Activated naive CD4-positive, alpha-beta T cell treated with anti-CD3 and anti-CD28 coated beads for 36 hours (primary cell): ENCODE measurements at regions of chr7 and their contacts with region 1.

Region 1: DNA sequence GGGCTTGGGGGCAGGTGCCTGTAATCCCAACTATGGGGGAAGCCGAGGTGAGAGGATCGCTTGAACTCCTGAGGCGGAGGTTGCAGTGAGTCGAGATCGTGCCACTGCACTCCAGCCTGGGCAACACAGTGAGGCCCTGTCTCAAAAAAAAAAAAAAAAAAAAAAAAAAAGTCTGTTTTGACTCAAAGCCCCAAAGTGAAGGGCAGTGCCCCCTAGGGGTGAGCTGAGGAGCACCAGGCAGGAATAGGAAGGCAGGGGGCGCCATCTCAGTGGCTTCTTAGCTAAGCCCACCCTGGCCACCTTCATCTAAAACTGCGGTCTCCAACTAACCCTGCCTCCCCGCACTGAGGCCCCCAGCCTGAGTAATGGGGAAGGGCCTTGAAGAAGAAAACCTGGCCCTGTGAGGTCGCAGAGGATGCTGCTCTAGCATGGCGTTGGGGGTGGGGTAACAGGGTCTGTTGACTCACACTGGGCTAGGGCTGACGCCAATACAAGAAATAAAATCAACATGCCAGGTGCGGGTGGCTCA is 9.8 kb downstream of the PODXL start:
- DNase-seq: peak; percentile 72
- H3K4me3 Mint-ChIP-seq: no peak overlapping the region
- H3K27ac Mint-ChIP-seq: no peak overlapping the region
- H3K4me1 Mint-ChIP-seq: no peaks in the 10 kb centered on the region
- H3K27me3 Mint-ChIP-seq: peaks cover 5% of the 10 kb centered on the region

Region 2: GRCh38 chr7:131507592-131508331 is 38.9 kb before region 1 on chr7:
- CTCF ChIA-PET with region 1: interaction called, 9 read pairs
- intact Hi-C with region 1: loop called (anchors 1 kb)
- DNase-seq: peak; percentile 91
- H3K4me3 Mint-ChIP-seq: no peak overlapping the region
- H3K27ac Mint-ChIP-seq: no peak overlapping the region
- H3K4me1 Mint-ChIP-seq: peaks cover 22% of the 10 kb centered on the region
- H3K27me3 Mint-ChIP-seq: peaks cover 8% of the 10 kb centered on the region

Region 3: GRCh38 chr7:131625817-131626372 is 79.2 kb after region 1 on chr7:
- CTCF ChIA-PET with region 1: no interaction called
- intact Hi-C with region 1: no loop called
- DNase-seq: no peak
- H3K4me3 Mint-ChIP-seq: no peak overlapping the region
- H3K27ac Mint-ChIP-seq: no peak overlapping the region
- H3K4me1 Mint-ChIP-seq: no peaks in the 10 kb centered on the region
- H3K27me3 Mint-ChIP-seq: peaks cover 5% of the 10 kb centered on the region